Brain microvascular endothelial cell (primary cell): ENCODE measurements at regions of chr2 and their contacts with region 1.

Region 1: DNA sequence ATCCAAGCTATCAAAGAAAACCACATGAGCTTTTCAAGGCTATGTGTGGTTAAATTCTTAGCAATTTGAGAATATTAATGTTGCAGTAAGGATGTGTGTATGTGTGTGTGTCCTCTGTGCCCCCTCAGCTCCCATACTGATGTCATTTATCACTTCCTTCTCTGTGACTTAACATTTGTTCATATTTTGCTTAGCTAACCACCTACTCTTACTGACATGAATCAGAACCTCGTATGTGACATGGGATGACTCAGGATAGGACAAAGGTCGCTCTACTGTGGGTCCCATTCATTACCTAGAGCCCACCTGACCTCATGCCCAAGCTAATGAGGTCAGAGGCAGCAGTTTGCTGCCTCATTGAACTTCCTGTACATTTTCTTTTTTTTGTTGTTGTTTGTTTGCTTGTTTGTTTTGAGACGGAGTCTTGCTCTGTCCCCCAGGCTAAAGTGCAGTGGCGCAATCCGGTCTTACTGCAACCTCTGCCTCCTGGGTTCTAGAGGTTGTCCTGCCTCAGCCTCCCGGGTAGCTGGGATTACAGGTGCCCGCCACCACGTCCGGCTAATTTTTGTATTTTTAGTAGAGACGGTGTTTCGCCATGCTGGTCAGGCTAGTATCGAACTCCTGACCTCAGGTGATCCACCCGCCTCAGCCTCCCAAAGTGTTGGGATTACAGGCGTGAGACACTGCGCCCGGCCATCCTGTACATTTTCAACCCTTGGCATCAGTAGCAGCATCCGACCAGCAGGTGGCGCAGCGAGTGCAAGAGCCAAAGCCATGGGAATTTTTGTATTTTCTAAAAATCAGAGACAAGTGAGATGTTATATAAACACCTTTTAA is 36.4 kb downstream of the MOGAT1 start:
- DNase-seq: peak; percentile 84
- H3K4me3 ChIP-seq: no peak overlapping the region
- H3K27ac ChIP-seq: peak overlapping the region; percentile 96
- H3K27me3 ChIP-seq: no peaks in the 10 kb centered on the region
- CTCF ChIP-seq: peak; percentile 90

Region 2: GRCh38 chr2:222860740-222861410 is 153.0 kb after region 1 on chr2 and contains the start of gene ACSL3:
- in situ Hi-C with region 1: loop called (anchors 25 kb)
- DNase-seq: peak; percentile 92
- H3K4me3 ChIP-seq: peak within 1 kb of the TSS; percentile 92
- H3K27ac ChIP-seq: peak within 1 kb of the TSS; percentile 94
- H3K27me3 ChIP-seq: no peaks in the 10 kb centered on the region
- CTCF ChIP-seq: no peak